ENCODE measurements at regions of chr13 and their contacts with region 1.

Region 1: DNA sequence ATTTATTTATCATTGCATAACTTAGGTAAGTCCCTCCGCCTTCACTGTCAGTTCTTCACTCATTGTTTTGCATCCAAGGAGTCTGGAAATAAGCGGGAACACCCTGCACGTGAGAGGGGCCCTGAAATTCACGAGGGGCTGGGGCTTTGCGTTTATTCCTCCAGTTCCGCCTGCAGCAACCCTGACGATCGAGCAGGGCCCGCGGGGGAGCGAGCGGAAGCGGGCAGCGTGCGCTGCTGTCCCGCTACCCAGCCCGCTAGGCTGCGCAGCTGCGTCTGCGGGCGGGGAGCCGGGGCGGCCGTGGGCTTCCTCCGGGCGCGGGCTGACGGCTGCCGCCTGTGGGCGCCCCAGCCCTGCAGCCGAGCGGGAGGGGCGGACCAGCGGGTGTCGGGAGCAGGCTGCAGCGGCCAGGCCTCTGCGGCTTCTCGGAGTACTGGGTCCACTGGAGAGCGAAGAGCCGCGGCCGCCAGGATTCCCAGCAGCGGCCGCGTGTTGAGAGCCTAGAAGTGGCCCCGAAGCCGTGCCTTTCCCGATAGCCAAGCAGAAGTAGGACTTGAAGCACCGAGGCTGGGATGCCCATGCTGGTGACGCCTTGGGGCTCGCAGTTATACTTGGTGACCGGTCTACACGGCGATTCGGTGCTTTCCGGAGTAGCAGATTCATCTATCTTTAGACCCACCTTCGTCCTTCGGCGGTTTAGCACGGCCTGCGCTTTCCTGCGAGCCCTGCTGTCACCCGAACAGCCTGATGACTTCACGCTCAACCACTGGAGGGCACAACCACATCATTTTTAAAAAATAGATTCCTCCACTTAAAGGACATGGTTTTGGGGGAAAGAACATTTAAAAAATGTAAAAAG is 32.9 kb upstream of the SACS start:
- DNase-seq: no peak
- H3K4me3 ChIP-seq: peak overlapping the region; percentile 47 to 70 (median 50)
- H3K27ac ChIP-seq: peak overlapping the region; percentile 77 to 89 (median 82)
- H3K4me1 ChIP-seq: peaks cover 4 to 33% (median 6%) of the 10 kb centered on the region in 3 donors
- H3K27me3 ChIP-seq: no peaks in the 10 kb centered on the region
- CTCF ChIP-seq: peak; percentile 9 to 72 (median 60)
- POLR2A ChIP-seq: no peak

Region 2: DNA sequence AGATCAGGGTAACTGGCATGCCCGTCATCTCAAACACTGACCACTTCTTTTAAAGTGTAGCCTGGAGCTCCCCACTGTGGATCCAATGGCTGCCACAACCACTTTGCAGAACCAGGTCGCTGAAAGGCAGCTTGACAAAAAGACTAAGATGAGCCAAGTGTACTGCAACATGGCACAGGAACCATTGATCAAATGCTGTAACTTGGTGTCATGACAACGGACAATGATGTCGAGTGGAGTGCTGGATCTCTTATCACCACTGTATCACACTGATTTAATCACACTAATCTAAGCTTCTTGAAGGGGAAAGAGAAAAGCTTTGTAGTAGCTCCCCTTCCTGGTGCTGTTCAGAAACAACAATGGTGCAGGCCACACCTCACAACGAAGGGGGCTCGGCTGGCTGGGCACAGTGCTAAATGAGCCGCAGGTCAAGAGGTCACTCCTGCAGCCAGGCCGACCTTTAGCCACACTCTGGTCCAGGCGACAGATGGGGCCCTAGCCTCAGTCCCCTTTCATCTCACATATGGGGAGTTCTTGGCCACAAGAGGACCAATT is 101.6 kb after region 1 on chr13:
- intact Hi-C with region 1: loop called (anchors 10 kb)
- DNase-seq: no peak
- H3K4me3 ChIP-seq: no peak overlapping the region
- H3K27ac ChIP-seq: no peak overlapping the region
- H3K4me1 ChIP-seq: peaks cover 0 to 35% (median 6%) of the 10 kb centered on the region in 3 donors
- H3K27me3 ChIP-seq: peaks cover 0 to 3% (median 0%) of the 10 kb centered on the region in 4 donors
- CTCF ChIP-seq: no peak
- POLR2A ChIP-seq: no peak

Region 3: GRCh38 chr13:23695711-23696464 is 229.5 kb after region 1 on chr13:
- intact Hi-C with region 1: loop called (anchors 10 kb)
- DNase-seq: peak; percentile 16
- H3K4me3 ChIP-seq: peak overlapping the region; percentile 7 to 41 (median 32)
- H3K27ac ChIP-seq: peak overlapping the region; percentile 14 to 72 (median 66)
- H3K4me1 ChIP-seq: peaks cover 0 to 16% (median 0%) of the 10 kb centered on the region in 3 donors
- H3K27me3 ChIP-seq: no peaks in the 10 kb centered on the region
- CTCF ChIP-seq: peak in 1 of 6 experiments; percentile 0
- POLR2A ChIP-seq: no peak

Region 4: DNA sequence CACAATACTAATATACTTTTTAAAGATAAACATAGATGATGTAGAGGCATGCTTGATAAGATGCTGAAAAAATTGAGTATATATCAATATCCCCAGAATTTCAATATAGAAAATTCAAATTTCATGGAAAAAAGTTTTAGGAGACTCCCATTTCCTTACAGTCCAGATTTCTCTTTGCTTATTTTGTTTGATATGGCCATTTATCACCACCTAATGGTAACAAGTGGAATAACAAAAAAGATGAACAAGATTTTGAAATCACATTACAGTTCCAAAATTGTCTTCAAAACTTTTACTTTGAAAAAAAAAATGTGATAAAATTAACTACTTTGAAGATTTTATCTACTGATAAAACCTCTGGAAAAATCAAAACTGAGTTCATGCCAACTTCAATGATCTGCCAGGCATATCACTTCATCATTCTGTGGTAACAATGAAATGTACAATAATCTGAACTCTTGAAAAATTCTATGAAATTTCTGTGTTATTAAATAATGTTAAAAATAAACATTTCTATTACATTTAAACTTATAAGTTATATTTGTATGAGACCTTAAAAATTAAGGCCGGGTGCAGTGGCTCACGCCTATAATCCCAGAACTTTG is 405.3 kb after region 1 on chr13:
- intact Hi-C with region 1: loop called (anchors 10 kb)
- DNase-seq: no peak
- H3K4me3 ChIP-seq: no peak overlapping the region
- H3K27ac ChIP-seq: peak overlapping the region in 1 of 4 donors; percentile 11
- H3K4me1 ChIP-seq: peaks cover 0 to 28% (median 4%) of the 10 kb centered on the region in 3 donors
- H3K27me3 ChIP-seq: no peaks in the 10 kb centered on the region
- CTCF ChIP-seq: peak; percentile 42 to 76 (median 56)
- POLR2A ChIP-seq: no peak

Region 5: DNA sequence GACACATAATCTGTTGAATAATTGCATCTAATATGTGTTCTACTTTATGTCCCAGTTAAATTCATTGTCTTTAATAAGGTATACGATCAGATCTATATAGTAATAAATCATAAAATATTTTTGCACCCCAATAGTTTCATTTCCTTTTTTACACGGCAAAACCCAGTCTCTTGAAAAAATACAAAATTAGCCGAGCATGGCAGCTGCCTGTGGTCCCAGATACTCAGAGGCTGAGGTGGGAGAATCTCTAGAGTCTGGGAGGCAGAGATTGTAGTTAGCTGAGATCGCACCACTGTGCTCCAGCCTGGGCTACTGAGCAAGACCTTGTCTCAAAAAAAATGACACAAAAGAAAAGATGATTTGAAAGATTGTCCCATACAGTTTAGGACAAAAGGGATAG is 1098.5 kb after region 1 on chr13:
- intact Hi-C with region 1: no loop called
- DNase-seq: no peak
- H3K4me3 ChIP-seq: no peak overlapping the region
- H3K27ac ChIP-seq: no peak overlapping the region
- H3K4me1 ChIP-seq: no peaks in the 10 kb centered on the region
- H3K27me3 ChIP-seq: peaks cover 0 to 8% (median 0%) of the 10 kb centered on the region in 4 donors
- CTCF ChIP-seq: no peak
- POLR2A ChIP-seq: no peak